ENCODE measurements at regions of chr14 and their contacts with region 1.

Region 1: GRCh38 chr14:101823511-101824120 is 62.1 kb downstream of the PPP2R5C start:
- DNase-seq: peak in 8 of 9 donors; percentile 71 to 87 (median 82)
- ATAC-seq: peak; percentile 72
- H3K4me3 ChIP-seq: peak overlapping the region; percentile 67
- H3K4me3 Mint-ChIP-seq: peak overlapping the region; percentile 85 to 96 (median 90)
- H3K27ac ChIP-seq: peak overlapping the region; percentile 97
- H3K27ac Mint-ChIP-seq: peak overlapping the region; percentile 90 to 100 (median 99)
- H3K4me1 ChIP-seq: peaks cover 64 to 68% of the 10 kb centered on the region in 2 donors
- H3K4me1 Mint-ChIP-seq: peaks cover 65 to 91% (median 86%) of the 10 kb centered on the region in 7 donors
- H3K27me3 ChIP-seq: no peaks in the 10 kb centered on the region
- H3K27me3 Mint-ChIP-seq: peaks cover 0 to 2% (median 0%) of the 10 kb centered on the region in 5 donors

Region 2: DNA sequence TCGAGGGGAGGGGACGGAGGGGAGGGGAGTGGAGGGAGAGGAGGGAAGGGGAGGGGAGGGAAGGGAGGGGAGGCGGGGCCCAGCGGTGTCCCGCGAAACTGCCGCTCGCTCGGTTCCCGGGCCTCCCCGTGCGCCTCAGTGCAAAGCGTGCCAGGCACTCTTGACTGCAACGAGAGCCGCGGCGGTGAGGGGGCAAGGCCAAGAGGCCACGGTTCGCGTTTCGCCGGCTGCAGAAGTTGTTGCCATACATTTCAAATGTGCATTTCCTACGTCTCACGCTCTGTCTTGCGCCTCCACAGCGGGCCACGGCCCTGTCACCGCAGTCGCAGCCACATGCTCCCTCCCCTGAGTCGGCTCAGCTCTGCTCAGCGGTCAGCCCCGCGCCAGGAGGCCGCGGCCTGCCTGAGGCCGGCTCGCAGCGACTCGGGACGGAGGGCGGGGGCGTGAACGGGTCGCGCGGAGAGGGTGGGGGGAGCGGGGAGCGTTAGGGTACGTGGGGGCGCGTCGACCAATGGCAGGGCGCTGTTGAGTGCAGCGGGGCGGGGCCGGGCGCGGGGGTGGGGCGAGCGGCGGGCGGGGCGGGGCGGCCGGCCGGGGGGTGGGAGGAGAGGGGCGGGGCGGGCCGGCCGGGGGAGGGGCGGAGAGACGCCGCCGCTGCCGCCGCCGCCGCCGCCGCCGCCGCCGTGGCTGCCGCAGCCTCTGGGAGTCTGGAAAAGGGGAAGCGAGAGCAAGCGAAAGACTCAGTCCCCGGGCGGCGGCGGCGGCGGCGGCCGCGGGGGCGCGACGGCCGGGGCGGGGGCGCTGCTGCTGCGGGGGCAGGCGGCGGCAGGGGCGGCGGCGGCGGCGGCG is 62.4 kb before region 1 on chr14 and contains the start of gene PPP2R5C:
- CTCF ChIA-PET with region 1: interaction called, 4 read pairs
- POLR2A ChIA-PET with region 1: interaction called, 33 read pairs
- intact Hi-C with region 1: loop called (anchors 1 kb)
- DNase-seq: peak; percentile 73 to 90 (median 87)
- ATAC-seq: peak; percentile 73
- H3K4me3 ChIP-seq: peak within 1 kb of the TSS; percentile 94
- H3K4me3 Mint-ChIP-seq: peak within 1 kb of the TSS; percentile 89 to 96 (median 93)
- H3K27ac ChIP-seq: peak within 1 kb of the TSS; percentile 91
- H3K27ac Mint-ChIP-seq: peak within 1 kb of the TSS; percentile 69 to 95 (median 91)
- H3K4me1 ChIP-seq: peaks cover 11 to 14% of the 10 kb centered on the region in 2 donors
- H3K4me1 Mint-ChIP-seq: peaks cover 30 to 56% (median 38%) of the 10 kb centered on the region in 7 donors
- H3K27me3 ChIP-seq: no peaks in the 10 kb centered on the region
- H3K27me3 Mint-ChIP-seq: peaks cover 0 to 11% (median 0%) of the 10 kb centered on the region in 5 donors
- total RNA-seq, gene PPP2R5C: 266 to 449 (median 405) TPM

Region 3: DNA sequence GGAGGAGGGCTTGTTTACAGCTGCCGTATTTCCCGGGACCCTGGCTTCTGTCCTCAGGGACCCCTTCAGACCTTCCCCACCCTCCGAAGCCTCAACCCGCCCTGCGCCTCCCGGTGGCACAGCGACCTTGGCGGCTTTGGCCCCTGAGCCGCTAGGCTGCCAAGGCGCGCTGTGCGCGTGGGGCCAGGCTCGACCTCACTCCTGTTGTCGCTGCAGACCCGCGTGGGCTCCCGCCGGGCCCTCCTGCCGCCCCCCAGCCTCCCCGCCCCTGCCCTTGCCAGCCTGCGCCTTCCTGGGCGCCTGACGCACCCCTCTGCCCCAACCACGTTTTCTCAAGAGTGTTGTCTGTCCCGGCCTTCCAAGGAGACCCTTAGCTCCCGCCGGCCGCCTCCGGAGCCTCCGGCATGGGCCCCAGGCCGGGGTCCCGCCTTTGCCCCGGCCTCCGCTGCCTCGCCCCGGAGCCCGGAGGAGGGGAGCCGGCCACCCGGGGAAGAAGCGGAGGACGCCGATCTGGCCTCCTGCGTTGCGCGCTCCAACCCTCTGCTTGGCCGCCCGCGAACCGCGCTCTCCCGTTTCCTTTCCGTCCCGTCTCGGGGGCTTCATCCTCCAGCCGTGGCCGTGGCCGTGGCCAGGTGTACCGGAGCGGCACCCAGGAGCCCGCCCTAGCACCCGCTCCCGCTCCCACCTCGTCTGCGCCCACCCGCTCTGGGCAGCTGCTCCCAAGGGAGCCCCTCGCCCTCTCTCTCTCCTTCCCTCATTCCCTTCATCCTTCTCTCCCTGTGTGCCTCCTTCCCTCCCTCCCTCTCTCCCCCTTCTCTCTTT is 42.2 kb before region 1 on chr14:
- CTCF ChIA-PET with region 1: interaction called, 3 read pairs
- POLR2A ChIA-PET with region 1: interaction called, 9 read pairs
- intact Hi-C with region 1: loop called in 1 of 2 experiments (anchors 2 kb)
- DNase-seq: peak in 6 of 9 donors; percentile 19 to 43 (median 38)
- ATAC-seq: peak; percentile 67
- H3K4me3 ChIP-seq: peak overlapping the region; percentile 55
- H3K4me3 Mint-ChIP-seq: peak overlapping the region; percentile 56 to 83 (median 73)
- H3K27ac ChIP-seq: peak overlapping the region; percentile 64
- H3K27ac Mint-ChIP-seq: peak overlapping the region in 2 of 9 donors; percentile 5 to 42
- H3K4me1 ChIP-seq: peaks cover 0 to 9% of the 10 kb centered on the region in 2 donors
- H3K4me1 Mint-ChIP-seq: peaks cover 14 to 34% (median 24%) of the 10 kb centered on the region in 7 donors
- H3K27me3 ChIP-seq: no peaks in the 10 kb centered on the region
- H3K27me3 Mint-ChIP-seq: peaks cover 0 to 25% (median 5%) of the 10 kb centered on the region in 5 donors

Region 4: GRCh38 chr14:101834800-101835547 is 11.4 kb after region 1 on chr14:
- CTCF ChIA-PET with region 1: interaction called, 6 read pairs
- POLR2A ChIA-PET with region 1: interaction called, 52 read pairs
- intact Hi-C with region 1: loop called in 1 of 2 experiments (anchors 1 kb)
- DNase-seq: no peak
- ATAC-seq: no peak
- H3K4me3 ChIP-seq: no peak overlapping the region
- H3K4me3 Mint-ChIP-seq: peak overlapping the region in 5 of 10 donors; percentile 21 to 56 (median 42)
- H3K27ac ChIP-seq: peak overlapping the region; percentile 38
- H3K27ac Mint-ChIP-seq: peak overlapping the region in 8 of 9 donors; percentile 36 to 85 (median 64)
- H3K4me1 ChIP-seq: peaks cover 62 to 92% of the 10 kb centered on the region in 2 donors
- H3K4me1 Mint-ChIP-seq: peaks cover 67 to 97% (median 86%) of the 10 kb centered on the region in 7 donors
- H3K27me3 ChIP-seq: no peaks in the 10 kb centered on the region
- H3K27me3 Mint-ChIP-seq: no peaks in the 10 kb centered on the region

Region 5: DNA sequence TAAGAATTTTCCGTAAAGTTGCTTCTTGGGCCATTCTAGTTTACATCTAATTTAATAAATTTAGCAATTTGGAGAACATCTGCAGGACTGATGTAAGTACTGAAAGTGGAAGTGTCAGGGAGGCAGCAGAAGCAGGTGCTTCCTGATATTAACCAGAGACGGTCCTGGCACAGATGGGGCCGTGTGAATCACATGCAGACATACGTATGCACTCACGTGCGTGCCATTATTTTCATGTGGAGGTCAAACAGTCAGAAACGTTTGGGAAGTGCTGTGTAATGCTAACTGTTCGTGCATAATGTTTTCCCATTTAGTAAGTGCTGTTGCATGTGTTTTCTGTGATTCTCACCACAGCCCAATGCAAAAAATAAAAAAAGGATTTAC is 52.9 kb after region 1 on chr14:
- CTCF ChIA-PET with region 1: no interaction called
- POLR2A ChIA-PET with region 1: no interaction called
- intact Hi-C with region 1: loop called in 1 of 2 experiments (anchors 5 kb)
- DNase-seq: peak in 8 of 9 donors; percentile 42 to 85 (median 68)
- ATAC-seq: peak; percentile 94
- H3K4me3 ChIP-seq: no peak overlapping the region
- H3K4me3 Mint-ChIP-seq: peak overlapping the region; percentile 43 to 87 (median 76)
- H3K27ac ChIP-seq: peak overlapping the region; percentile 72
- H3K27ac Mint-ChIP-seq: peak overlapping the region; percentile 72 to 95 (median 89)
- H3K4me1 ChIP-seq: peaks cover 24 to 52% of the 10 kb centered on the region in 2 donors
- H3K4me1 Mint-ChIP-seq: peaks cover 42 to 96% (median 78%) of the 10 kb centered on the region in 7 donors
- H3K27me3 ChIP-seq: no peaks in the 10 kb centered on the region
- H3K27me3 Mint-ChIP-seq: no peaks in the 10 kb centered on the region

Region 6: GRCh38 chr14:102316743-102317563 is 493.3 kb after region 1 on chr14:
- CTCF ChIA-PET with region 1: no interaction called
- POLR2A ChIA-PET with region 1: interaction called, 3 read pairs
- intact Hi-C with region 1: loop called in 1 of 2 experiments (anchors 2 kb)
- DNase-seq: peak; percentile 90 to 99 (median 95)
- ATAC-seq: peak; percentile 77
- H3K4me3 ChIP-seq: peak overlapping the region; percentile 84
- H3K4me3 Mint-ChIP-seq: peak overlapping the region; percentile 91 to 99 (median 97)
- H3K27ac ChIP-seq: peak overlapping the region; percentile 62
- H3K27ac Mint-ChIP-seq: peak overlapping the region; percentile 95 to 99 (median 98)
- H3K4me1 ChIP-seq: peaks cover 37 to 43% of the 10 kb centered on the region in 2 donors
- H3K4me1 Mint-ChIP-seq: peaks cover 34 to 76% (median 64%) of the 10 kb centered on the region in 7 donors
- H3K27me3 ChIP-seq: no peaks in the 10 kb centered on the region
- H3K27me3 Mint-ChIP-seq: peaks cover 0 to 6% (median 0%) of the 10 kb centered on the region in 5 donors

Measured in naive thymus-derived CD4-positive, alpha-beta T cell (primary cell).